Activated CD4-positive, alpha-beta T cell treated with anti-CD3 and anti-CD28 coated beads, Interleukin-2, amount 10 ng/mL, durations not matched to agents 24 days and 14 days (primary cell): ENCODE measurements at regions of chr12 and their contacts with region 1.

Region 1: GRCh38 chr12:91877022-91877421 is 268.6 kb downstream of the BTG1 start:
- DNase-seq: peak; percentile 95
- H3K4me3 Mint-ChIP-seq: peak overlapping the region; percentile 80
- H3K27ac Mint-ChIP-seq: peak overlapping the region; percentile 97
- H3K4me1 Mint-ChIP-seq: peaks cover 46% of the 10 kb centered on the region
- H3K27me3 Mint-ChIP-seq: no peaks in the 10 kb centered on the region

Region 2: DNA sequence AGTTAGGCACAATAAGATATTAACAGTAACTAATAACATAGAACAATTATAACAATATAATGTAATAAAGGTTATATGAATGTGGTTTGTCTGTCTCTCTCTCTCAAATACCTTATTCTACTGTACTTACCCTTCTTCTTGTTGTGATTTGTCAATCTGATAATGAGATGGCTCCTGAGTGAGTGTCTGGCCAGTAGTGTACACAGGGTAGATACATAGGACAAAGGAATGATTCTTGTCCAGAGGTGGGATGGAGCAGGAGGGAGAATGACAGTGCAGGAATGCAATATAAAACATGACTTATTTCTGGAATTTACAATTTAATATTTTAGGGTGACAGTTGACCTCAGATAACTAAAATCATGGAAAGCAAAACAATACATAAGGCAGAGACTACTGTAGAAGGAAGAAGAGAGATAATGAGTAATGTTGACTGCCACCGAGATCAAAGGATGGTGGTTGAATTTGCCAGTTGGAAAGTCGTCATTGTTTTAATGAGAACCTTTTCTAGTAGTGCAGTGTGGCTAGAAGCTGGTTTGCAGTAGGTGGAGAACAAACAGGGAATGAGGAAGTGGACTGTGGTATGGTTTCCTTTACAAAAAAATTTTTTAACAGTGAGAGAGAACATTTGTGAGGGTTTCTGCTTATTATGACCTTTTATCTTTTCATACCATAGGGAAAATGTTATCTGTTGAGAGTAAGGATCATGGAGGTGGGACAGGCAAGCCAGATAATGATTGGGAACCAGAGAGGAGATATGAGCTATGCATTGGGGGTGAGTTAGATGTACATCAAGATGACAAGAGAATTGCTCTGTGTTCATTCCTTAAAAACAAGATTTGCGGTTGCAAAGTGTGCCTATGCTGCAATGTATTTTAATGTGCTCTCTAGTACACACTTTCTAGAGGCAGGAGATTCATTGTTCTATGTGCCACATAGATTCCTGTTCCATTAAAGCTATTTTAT is 189.7 kb before region 1 on chr12:
- intact Hi-C with region 1: loop called (anchors 1 kb)
- DNase-seq: peak; percentile 78
- H3K4me3 Mint-ChIP-seq: peak overlapping the region; percentile 57
- H3K27ac Mint-ChIP-seq: peak overlapping the region; percentile 83
- H3K4me1 Mint-ChIP-seq: peaks cover 24% of the 10 kb centered on the region
- H3K27me3 Mint-ChIP-seq: no peaks in the 10 kb centered on the region

Region 3: DNA sequence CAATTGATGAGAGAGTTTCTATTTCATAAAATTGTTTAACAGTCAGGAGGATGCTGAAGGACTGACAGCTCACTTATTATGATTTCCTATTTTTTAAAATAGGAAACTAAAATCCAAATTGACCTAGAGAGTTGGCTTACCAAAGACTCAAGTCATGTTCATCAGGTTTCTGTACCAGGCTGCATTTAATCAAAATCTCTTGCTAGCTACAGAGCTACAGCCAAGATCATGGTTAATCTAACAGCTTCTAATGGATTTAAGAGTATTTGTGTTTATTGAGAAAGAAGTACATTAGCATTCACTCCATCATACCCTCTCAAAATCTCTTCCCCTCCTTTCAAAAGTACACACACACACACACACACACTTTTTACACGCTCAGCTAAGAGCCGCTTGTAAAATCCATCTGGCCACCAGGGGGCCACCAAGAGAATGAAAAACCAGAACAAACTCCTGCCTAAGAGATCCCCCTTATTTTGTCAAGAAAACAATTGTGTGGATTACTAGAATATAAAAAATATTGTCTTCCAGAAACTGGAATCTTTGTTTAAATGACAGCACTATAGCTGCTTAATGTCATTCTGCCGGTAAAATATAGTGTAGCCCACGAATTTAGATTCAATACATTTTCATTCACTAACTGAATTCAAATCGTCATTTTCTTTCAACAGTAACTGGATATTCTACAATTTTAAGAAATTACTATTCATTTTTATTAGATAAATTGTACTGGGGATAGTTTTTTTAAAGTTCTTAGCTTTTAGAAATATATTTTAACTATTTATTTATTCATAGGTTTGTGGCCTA is 65.3 kb before region 1 on chr12:
- intact Hi-C with region 1: loop called (anchors 10 kb)
- DNase-seq: peak; percentile 89
- H3K4me3 Mint-ChIP-seq: no peak overlapping the region
- H3K27ac Mint-ChIP-seq: no peak overlapping the region
- H3K4me1 Mint-ChIP-seq: peaks cover 6% of the 10 kb centered on the region
- H3K27me3 Mint-ChIP-seq: no peaks in the 10 kb centered on the region

Region 4: DNA sequence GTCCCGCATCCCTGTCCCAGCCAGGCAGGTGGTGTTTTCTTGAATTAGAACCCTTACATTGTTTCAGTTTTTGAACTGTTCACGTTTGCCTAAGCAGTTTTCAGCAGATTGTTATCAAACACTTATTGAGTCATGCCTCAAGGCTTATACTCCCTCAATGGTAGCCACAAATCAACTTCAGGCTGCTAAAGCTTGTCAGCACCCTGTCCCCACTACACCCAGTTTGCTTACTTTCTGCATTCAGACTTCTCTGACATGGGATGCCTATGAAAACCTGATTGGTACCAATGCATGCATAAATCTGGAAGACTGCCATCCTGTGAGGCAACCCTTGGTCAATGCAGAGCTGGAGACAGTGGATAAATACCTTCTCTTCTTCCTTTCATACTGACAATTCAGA is 43.3 kb after region 1 on chr12:
- intact Hi-C with region 1: no loop called
- DNase-seq: no peak
- H3K4me3 Mint-ChIP-seq: no peak overlapping the region
- H3K27ac Mint-ChIP-seq: no peak overlapping the region
- H3K4me1 Mint-ChIP-seq: peaks cover 8% of the 10 kb centered on the region
- H3K27me3 Mint-ChIP-seq: no peaks in the 10 kb centered on the region

Region 5: DNA sequence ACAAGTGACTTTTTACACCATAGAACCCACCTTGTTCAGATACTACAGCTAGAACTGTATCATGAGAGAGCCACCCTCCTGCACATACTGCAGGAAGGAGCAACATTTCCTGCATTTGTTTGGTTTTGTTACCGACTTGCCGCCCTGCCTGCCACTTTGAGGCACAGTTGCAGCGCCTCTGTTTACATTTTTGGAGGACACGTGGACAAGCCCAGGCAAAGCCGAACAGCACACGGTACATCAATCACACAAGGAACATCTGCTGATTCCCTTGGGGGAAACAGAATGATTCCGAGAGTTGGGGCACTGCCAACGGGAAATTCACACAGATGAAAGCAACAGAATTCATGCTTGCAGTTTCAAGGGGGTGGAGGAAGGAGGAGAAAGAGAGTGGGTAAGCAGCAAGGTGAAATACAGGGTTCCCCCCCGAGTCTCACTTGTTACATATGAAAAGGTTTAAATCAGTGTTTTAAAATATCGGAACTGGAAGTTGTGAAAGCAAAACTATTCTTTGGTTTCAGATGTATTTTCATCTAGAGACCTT is 157.9 kb after region 1 on chr12:
- intact Hi-C with region 1: loop called (anchors 10 kb)
- DNase-seq: peak; percentile 83
- H3K4me3 Mint-ChIP-seq: peak overlapping the region; percentile 88
- H3K27ac Mint-ChIP-seq: peak overlapping the region; percentile 84
- H3K4me1 Mint-ChIP-seq: peaks cover 64% of the 10 kb centered on the region
- H3K27me3 Mint-ChIP-seq: no peaks in the 10 kb centered on the region

Region 6: GRCh38 chr12:92208613-92209121 is 331.6 kb after region 1 on chr12:
- intact Hi-C with region 1: loop called (anchors 5 kb)
- DNase-seq: peak; percentile 82
- H3K4me3 Mint-ChIP-seq: peak overlapping the region; percentile 66
- H3K27ac Mint-ChIP-seq: peak overlapping the region; percentile 94
- H3K4me1 Mint-ChIP-seq: peaks cover 36% of the 10 kb centered on the region
- H3K27me3 Mint-ChIP-seq: no peaks in the 10 kb centered on the region

Region 7: DNA sequence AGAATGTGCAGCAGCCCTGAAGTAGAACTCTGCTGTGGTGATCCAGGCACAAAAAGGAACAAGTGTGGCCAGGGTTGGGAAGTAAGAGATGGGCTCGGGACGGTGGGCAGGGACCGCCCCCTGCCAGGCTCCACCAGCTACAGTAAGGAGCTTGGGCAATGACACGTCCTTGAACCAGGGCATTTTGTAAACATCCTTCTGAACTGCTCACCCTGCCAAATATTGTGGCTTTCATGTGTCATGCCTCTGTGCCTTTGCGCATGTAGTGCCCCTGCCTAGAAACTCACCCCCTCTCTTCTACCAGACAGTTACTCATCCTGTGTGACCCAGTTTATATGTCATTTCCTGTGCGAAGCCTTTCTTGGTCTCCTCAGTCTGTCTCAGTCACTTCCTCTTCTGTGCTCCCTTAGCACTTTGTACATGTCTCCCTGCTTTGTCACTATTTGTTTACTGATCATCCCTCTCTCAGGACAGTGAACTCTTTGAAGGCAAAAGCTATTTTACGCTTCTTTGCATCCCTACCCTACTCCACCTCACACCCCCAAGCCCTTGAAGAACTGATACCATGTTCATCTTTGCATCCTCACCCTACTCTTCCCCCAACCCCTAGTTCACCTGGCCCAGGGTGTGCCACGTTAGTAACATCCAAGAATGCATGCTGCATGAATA is 716.8 kb after region 1 on chr12:
- intact Hi-C with region 1: loop called (anchors 2 kb)
- DNase-seq: peak; percentile 92
- H3K4me3 Mint-ChIP-seq: peak overlapping the region; percentile 71
- H3K27ac Mint-ChIP-seq: peak overlapping the region; percentile 99
- H3K4me1 Mint-ChIP-seq: peaks cover 57% of the 10 kb centered on the region
- H3K27me3 Mint-ChIP-seq: no peaks in the 10 kb centered on the region